Breast epithelium (tissue), 4 donors: ENCODE measurements at regions of chr19 and their contacts with region 1.

Region 1: DNA sequence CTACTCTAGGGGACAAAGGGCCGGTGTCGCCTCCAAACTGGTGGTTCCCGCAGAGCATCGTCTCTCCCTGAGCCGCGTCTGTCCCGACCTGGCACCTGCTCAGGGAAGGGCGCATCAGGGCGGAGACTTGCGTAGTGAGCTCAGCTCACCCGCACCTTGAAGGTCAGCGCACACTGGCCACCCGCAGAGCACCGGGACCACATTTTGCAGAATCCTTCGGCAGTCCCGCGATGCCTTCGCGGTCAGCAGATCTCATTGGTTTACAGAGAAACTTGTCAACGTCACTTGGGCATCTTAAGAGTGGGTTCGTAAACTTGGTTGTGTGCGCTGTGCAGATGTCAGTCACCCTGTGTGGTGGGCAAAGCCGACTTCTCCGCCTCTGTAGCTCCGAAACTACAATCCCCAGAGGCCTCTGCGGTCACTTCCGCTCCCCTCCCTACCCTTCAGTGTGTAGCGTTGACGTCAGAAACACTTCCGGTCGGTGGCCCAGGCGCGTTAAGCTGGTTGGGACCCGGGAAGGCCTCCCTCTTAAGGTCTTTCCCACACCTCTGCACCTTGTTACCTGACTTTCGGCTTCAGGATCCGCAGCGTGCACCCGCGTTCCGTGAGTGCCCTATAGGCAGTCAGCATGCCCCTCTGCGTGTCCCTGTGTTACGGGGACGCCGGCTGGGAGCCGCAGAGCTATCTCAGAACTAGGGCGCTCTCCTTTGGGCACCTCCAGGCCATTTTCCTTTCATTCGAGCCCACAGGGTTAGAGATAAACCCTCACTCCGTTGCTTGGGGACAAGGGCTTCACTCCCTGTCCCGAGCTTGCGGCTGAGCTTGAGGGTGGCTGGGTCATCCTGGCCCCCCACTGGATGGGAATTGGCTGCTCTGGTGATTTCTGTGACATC is 36.5 kb upstream of the ZNF527 start:
- DNase-seq: peak; percentile 86 to 89
- H3K4me3 ChIP-seq: peak overlapping the region; percentile 83 to 93 (median 84)
- H3K27ac ChIP-seq: peak overlapping the region; percentile 94 to 95
- H3K4me1 ChIP-seq: no peaks in the 10 kb centered on the region
- H3K27me3 ChIP-seq: no peaks in the 10 kb centered on the region
- CTCF ChIP-seq: no peak
- POLR2A ChIP-seq: peak; percentile 50

Region 2: GRCh38 chr19:36214386-36215275 is 1119.8 kb before region 1 on chr19 and contains the starts of genes ZNF146 and ZNF565:
- intact Hi-C with region 1: loop called (anchors 5 kb)
- DNase-seq: peak; percentile 95 to 97
- H3K4me3 ChIP-seq: peak within 1 kb of the TSS; percentile 68 to 95 (median 70)
- H3K27ac ChIP-seq: peak within 1 kb of the TSS; percentile 96 to 97
- H3K4me1 ChIP-seq: peaks cover 0 to 5% of the 10 kb centered on the region in 2 donors
- H3K27me3 ChIP-seq: no peaks in the 10 kb centered on the region
- CTCF ChIP-seq: peak; percentile 5 to 59 (median 45)
- POLR2A ChIP-seq: peak; percentile 91
- total RNA-seq, gene ZNF146: 55.5 to 109 (median 78.7) TPM
- total RNA-seq, gene ZNF565: 4.3 to 7.8 (median 7.2) TPM

Region 3: GRCh38 chr19:38229585-38230073 is 895.2 kb after region 1 on chr19:
- intact Hi-C with region 1: no loop called
- DNase-seq: no peak
- H3K4me3 ChIP-seq: peak overlapping the region in 1 of 3 donors; percentile 54
- H3K27ac ChIP-seq: no peak overlapping the region
- H3K4me1 ChIP-seq: peaks cover 7 to 8% of the 10 kb centered on the region in 2 donors
- H3K27me3 ChIP-seq: peaks cover 11 to 53% of the 10 kb centered on the region in 2 donors
- CTCF ChIP-seq: no peak
- POLR2A ChIP-seq: no peak